ENCODE measurements at regions of chr17 and their contacts with region 1.

Region 1: GRCh38 chr17:1365445-1366039 is 34.5 kb downstream of the YWHAE start:
- DNase-seq: peak; percentile 46
- ATAC-seq: peak; percentile 81
- H3K4me3 ChIP-seq: no peak overlapping the region
- H3K27ac ChIP-seq: peak overlapping the region; percentile 37; the same call in 1 of the 2 replicates
- H3K4me1 ChIP-seq: peaks cover 33% of the 10 kb centered on the region
- H3K27me3 ChIP-seq: no peaks in the 10 kb centered on the region
- CTCF ChIP-seq: peak; percentile 86 to 91 (median 89)
- EP300 ChIP-seq: no peak
- POLR2A ChIP-seq: no peak
- RAD21 ChIP-seq: peak; percentile 92

Region 2: GRCh38 chr17:1347589-1348323 is 17.8 kb before region 1 on chr17:
- CTCF ChIA-PET with region 1: interaction called, 17 read pairs
- POLR2A ChIA-PET with region 1: interaction called, 14 read pairs
- RAD21 ChIA-PET with region 1: interaction called, 3 read pairs
- SMC1A ChIA-PET with region 1: interaction called, 13 read pairs
- in situ Hi-C with region 1: no loop called
- intact Hi-C with region 1: no loop called
- DNase-seq: no peak
- ATAC-seq: no peak
- H3K4me3 ChIP-seq: no peak overlapping the region
- H3K27ac ChIP-seq: no peak overlapping the region
- H3K4me1 ChIP-seq: peaks cover 1% of the 10 kb centered on the region; the same call in 1 of the 2 replicates
- H3K27me3 ChIP-seq: no peaks in the 10 kb centered on the region
- CTCF ChIP-seq: no peak
- EP300 ChIP-seq: no peak
- POLR2A ChIP-seq: no peak
- RAD21 ChIP-seq: no peak

Region 3: GRCh38 chr17:1399679-1400512 is 34.4 kb after region 1 on chr17 and contains the start of gene YWHAE:
- CTCF ChIA-PET with region 1: interaction called, 34 read pairs
- POLR2A ChIA-PET with region 1: interaction called, 7 read pairs
- RAD21 ChIA-PET with region 1: interaction called, 31 read pairs
- SMC1A ChIA-PET with region 1: interaction called, 29 read pairs
- in situ Hi-C with region 1: no loop called
- intact Hi-C with region 1: no loop called
- DNase-seq: peak; percentile 62
- ATAC-seq: peak; percentile 96
- H3K4me3 ChIP-seq: peak within 1 kb of the TSS; percentile 83
- H3K27ac ChIP-seq: peak within 1 kb of the TSS; percentile 93
- H3K4me1 ChIP-seq: no peaks in the 10 kb centered on the region
- H3K27me3 ChIP-seq: no peaks in the 10 kb centered on the region
- CTCF ChIP-seq: no peak
- EP300 ChIP-seq: no peak
- POLR2A ChIP-seq: peak; percentile 98
- RAD21 ChIP-seq: no peak
- polyA plus RNA-seq, gene YWHAE: 369 to 425 TPM

Region 4: DNA sequence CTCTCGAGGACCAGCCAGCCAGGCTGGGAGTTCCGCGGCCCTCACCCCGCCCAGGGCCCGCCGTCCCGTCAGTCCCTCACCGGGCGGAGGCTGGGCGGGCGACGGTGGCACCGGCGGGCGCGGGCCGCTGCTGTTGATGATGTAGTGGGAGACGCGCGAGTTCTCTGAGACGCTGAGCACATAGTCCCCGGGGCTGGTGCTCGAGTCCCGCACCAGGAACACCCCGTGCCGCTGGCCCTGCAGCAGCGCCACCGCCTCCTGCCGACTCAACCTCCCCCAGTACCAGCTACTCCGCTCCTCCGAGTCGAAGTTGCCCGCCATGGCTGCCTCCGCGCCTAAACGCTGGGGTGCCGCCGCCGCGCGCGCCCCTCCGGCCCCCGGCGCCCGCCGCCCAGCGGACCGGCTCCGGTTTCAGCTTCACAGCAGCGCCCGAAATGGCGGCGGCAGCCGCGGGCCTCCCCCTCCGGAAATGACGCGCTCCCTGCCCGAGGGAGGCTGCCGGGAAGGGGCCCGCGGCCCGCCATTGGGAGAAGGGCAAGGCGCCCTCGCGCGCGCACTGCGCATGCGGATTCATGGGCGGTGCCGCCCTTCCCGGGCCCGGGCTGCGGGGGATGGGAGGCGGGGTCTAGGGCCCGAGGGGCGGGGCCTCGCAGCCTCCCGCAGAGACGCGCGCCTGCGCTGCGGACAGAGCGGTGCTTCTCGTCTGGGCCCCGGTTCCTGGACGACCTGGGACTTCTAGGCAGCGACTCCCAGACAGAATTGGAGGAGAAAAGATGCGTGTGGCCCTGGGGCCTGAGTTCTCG is 90.5 kb after region 1 on chr17 and contains the start of gene CRK:
- CTCF ChIA-PET with region 1: interaction called, 16 read pairs
- POLR2A ChIA-PET with region 1: interaction called, 4 read pairs
- RAD21 ChIA-PET with region 1: interaction called, 11 read pairs
- SMC1A ChIA-PET with region 1: interaction called, 8 read pairs
- in situ Hi-C with region 1: no loop called
- intact Hi-C with region 1: loop called (anchors 1 kb)
- DNase-seq: peak; percentile 73
- ATAC-seq: peak; percentile 92
- H3K4me3 ChIP-seq: peak within 1 kb of the TSS; percentile 73
- H3K27ac ChIP-seq: peak within 1 kb of the TSS; percentile 89
- H3K4me1 ChIP-seq: peaks cover 3% of the 10 kb centered on the region; the same call in 1 of the 2 replicates
- H3K27me3 ChIP-seq: no peaks in the 10 kb centered on the region
- CTCF ChIP-seq: no peak
- EP300 ChIP-seq: no peak
- POLR2A ChIP-seq: peak; percentile 85
- RAD21 ChIP-seq: 0 out of 2 replicates have a peak, but pooled peaks have one; percentile 1
- polyA plus RNA-seq, gene CRK: 11.1 to 11.3 TPM

Region 5: GRCh38 chr17:1498869-1499268 is 133.3 kb after region 1 on chr17:
- CTCF ChIA-PET with region 1: interaction called, 23 read pairs
- POLR2A ChIA-PET with region 1: no interaction called
- RAD21 ChIA-PET with region 1: interaction called, 6 read pairs
- SMC1A ChIA-PET with region 1: interaction called, 4 read pairs
- in situ Hi-C with region 1: no loop called
- intact Hi-C with region 1: no loop called
- DNase-seq: no peak
- ATAC-seq: peak; percentile 25; the same call in 2 of the 3 replicates
- H3K4me3 ChIP-seq: no peak overlapping the region
- H3K27ac ChIP-seq: no peak overlapping the region
- H3K4me1 ChIP-seq: no peaks in the 10 kb centered on the region
- H3K27me3 ChIP-seq: no peaks in the 10 kb centered on the region
- CTCF ChIP-seq: no peak
- EP300 ChIP-seq: no peak
- POLR2A ChIP-seq: no peak
- RAD21 ChIP-seq: no peak

Region 6: DNA sequence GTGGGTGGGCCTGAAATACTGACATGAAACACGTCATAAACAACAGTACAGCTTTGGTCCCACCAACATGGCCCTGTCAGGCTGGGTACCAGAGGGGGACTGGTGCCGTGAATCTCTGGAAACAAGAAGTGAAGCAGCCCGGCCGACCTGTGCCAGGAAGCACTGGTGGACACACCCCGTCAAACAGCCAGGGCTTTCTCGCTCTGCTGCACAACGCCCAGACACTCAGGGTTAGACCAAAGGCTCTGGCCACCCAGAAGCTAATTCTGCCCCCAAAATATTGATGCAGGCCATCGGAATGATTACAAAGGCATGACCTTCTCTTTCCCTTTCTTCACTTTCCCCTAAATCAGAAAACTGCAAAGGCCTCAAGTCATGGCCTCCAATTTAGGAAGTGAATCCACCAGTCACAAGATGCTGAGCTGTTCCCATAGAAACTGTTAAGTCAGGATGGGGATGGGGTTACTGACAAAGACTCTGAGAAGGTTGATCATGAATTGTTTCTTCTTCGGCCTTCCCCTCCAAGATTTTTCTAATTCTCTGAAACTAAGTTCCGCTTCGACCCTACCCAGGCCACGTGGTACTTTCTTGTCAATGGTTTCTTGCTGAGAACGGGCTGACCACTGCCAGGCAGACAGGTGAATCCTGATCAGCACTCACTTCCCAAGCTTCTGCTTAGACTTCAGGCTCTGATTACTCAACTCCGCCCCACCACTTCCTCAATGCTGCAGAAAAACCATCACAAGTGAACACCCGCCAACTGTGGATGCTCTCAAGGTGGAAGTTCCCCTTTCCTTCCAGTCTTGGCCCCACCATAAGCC is 190.3 kb after region 1 on chr17:
- CTCF ChIA-PET with region 1: interaction called, 17 read pairs
- POLR2A ChIA-PET with region 1: interaction called, 3 read pairs
- RAD21 ChIA-PET with region 1: interaction called, 3 read pairs
- SMC1A ChIA-PET with region 1: interaction called, 3 read pairs
- in situ Hi-C with region 1: no loop called
- intact Hi-C with region 1: no loop called
- DNase-seq: peak; percentile 43
- ATAC-seq: peak; percentile 81
- H3K4me3 ChIP-seq: no peak overlapping the region
- H3K27ac ChIP-seq: peak overlapping the region; percentile 69
- H3K4me1 ChIP-seq: peaks cover 40% of the 10 kb centered on the region
- H3K27me3 ChIP-seq: no peaks in the 10 kb centered on the region
- CTCF ChIP-seq: no peak
- EP300 ChIP-seq: peak in 1 of 2 experiments; percentile 20; a peak in 1 of 4 replicates
- POLR2A ChIP-seq: no peak
- RAD21 ChIP-seq: no peak